ENCODE measurements at regions of chr5 and their contacts with region 1.

Region 1: GRCh38 chr5:10353241-10354047 is at the start of gene MARCHF6:
- DNase-seq: peak; percentile 96
- H3K4me3 Mint-ChIP-seq: peak within 1 kb of the TSS; percentile 99
- H3K27ac Mint-ChIP-seq: peak within 1 kb of the TSS; percentile 99
- H3K4me1 Mint-ChIP-seq: peaks cover 39% of the 10 kb centered on the region
- H3K27me3 Mint-ChIP-seq: no peaks in the 10 kb centered on the region
- total RNA-seq, gene MARCHF6: 103 to 108 TPM

Region 2: DNA sequence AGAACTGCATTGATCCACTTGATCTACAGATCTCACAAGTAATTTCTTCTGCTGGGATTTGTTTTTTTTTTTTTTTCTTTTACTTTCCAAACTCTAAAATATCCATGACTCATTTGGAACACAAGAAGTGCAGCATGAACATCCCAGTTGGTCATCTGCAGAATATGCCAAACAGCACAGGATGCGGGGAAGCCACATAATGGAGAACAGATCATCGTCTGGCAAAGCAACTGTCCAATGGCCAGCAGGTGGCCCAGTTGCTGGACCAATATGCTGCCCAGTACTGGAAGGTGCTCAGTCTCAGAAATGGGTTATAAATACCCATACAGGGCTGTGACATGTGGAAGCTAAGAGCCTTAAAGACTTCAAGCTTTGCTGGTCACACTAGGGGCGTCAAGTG is 502.0 kb before region 1 on chr5:
- CTCF ChIA-PET with region 1: no interaction called
- POLR2A ChIA-PET with region 1: no interaction called
- intact Hi-C with region 1: no loop called
- DNase-seq: no peak
- H3K4me3 Mint-ChIP-seq: no peak overlapping the region
- H3K27ac Mint-ChIP-seq: no peak overlapping the region
- H3K4me1 Mint-ChIP-seq: no peaks in the 10 kb centered on the region
- H3K27me3 Mint-ChIP-seq: no peaks in the 10 kb centered on the region

Region 3: GRCh38 chr5:10111571-10111970 is 241.9 kb before region 1 on chr5:
- CTCF ChIA-PET with region 1: no interaction called
- POLR2A ChIA-PET with region 1: no interaction called
- intact Hi-C with region 1: no loop called
- DNase-seq: no peak
- H3K4me3 Mint-ChIP-seq: no peak overlapping the region
- H3K27ac Mint-ChIP-seq: no peak overlapping the region
- H3K4me1 Mint-ChIP-seq: no peaks in the 10 kb centered on the region
- H3K27me3 Mint-ChIP-seq: peaks cover 6% of the 10 kb centered on the region

Region 4: DNA sequence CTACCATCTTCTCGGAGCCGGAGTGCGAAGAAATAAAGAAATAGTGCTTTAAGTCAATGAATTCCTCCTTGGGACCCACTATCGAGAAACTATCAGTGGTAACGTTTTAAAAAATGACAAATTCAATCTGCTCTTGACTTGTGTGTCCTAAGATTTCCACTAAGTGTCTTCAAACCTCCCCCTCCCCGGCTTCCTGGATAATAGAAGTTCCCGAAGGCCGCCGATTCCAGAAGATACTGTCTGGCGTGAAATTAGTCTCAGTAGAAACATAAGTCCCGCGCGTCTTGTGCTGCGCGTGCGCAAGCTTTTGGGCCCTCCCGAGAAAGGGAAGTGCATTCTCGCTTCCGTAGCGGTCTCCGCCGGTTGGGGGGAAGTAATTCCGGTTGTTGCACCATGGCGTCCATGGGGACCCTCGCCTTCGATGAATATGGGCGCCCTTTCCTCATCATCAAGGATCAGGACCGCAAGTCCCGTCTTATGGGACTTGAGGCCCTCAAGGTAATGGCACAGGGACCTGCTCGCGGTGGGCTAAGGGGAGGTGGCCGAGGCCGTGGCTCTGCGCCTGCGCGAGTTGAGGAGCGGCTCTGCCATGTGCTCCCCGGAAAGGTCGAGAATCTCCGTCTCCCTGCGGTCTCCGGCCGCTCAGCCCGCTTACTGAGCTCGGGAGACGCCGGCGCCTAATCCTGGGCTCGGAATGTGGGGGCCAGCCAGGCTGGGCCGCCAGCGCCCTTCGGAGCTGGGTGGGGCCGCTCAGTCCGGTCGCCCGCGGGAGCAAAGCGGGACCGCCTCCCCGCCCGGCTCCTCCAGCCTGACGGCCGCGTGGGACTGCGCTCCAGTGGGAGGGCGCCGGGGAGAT is 103.3 kb before region 1 on chr5 and contains the start of gene CCT5:
- CTCF ChIA-PET with region 1: interaction called, 4 read pairs
- POLR2A ChIA-PET with region 1: interaction called, 36 read pairs
- intact Hi-C with region 1: loop called (anchors 1 kb)
- DNase-seq: peak; percentile 93
- H3K4me3 Mint-ChIP-seq: peak within 1 kb of the TSS; percentile 84
- H3K27ac Mint-ChIP-seq: peak within 1 kb of the TSS; percentile 99
- H3K4me1 Mint-ChIP-seq: peaks cover 47% of the 10 kb centered on the region
- H3K27me3 Mint-ChIP-seq: no peaks in the 10 kb centered on the region
- total RNA-seq, gene CCT5: 360 to 375 TPM

Region 5: DNA sequence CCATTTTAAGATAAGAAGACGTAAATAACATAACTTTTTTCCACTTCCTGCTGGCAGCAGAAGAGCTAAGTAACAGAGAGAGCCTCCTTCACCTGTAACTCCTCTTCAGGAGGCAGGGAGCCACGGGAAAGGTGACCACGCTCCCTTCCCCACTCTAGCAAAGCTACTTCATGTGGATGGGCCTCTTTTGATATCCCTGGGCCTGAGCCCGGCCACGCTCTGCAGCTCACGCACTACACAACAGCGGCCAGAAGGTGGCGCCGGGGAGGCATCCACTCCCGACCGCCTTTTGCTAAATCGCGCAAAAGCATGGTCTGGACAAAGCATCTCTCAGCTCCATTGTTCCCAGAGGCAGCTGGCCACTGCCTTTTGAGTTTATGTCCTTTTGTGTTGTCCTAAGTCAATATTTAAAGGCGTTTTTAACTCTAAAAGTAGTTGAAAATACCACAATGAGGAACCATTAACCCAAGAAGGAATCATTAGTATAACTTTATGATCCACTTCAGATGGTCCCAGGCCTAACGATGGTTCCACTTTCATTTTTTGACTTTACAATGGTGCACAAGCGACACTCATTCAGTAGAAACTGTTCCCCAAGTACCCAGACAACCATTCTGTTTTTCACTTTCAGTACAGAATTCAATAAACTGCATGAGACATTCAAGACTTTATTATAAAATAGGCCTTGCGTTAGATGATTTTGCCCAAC is 69.4 kb before region 1 on chr5:
- CTCF ChIA-PET with region 1: interaction called, 12 read pairs
- POLR2A ChIA-PET with region 1: interaction called, 9 read pairs
- intact Hi-C with region 1: loop called (anchors 1 kb)
- DNase-seq: peak; percentile 87
- H3K4me3 Mint-ChIP-seq: no peak overlapping the region
- H3K27ac Mint-ChIP-seq: peak overlapping the region; percentile 13
- H3K4me1 Mint-ChIP-seq: peaks cover 18% of the 10 kb centered on the region
- H3K27me3 Mint-ChIP-seq: no peaks in the 10 kb centered on the region

Region 6: DNA sequence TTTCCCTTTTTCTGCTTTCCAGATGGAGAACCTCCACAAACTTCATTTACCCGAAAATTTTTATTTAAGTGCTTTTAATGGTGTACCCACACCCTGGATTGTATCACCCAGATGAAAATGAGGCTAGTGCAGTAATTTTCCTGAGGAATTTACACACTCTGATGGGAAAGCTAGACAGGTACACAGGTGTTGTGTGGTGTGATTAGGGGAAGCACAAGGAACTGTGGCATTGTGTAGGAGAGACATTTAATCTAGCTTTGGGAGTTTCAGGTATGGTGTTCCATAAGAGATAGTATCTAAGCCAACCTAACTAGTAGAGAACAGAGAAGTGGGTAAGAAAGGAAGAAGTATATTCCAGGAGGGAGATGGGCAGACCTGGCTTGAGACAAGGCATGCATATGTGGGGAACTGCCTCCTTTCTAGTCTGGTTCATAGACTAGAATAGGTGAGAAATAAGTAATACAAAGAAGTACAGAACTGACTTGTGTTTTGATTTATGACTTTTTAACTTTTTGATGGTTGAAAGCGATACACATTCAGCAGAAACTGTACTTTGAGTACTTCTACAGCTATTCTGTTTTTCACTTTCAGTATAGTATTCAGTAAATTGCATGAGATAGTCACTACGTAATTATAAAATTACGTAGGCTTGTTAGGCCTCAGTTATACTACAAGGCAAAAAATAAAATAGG is 65.4 kb after region 1 on chr5:
- CTCF ChIA-PET with region 1: interaction called, 9 read pairs
- POLR2A ChIA-PET with region 1: interaction called, 14 read pairs
- intact Hi-C with region 1: loop called (anchors 1 kb)
- DNase-seq: no peak
- H3K4me3 Mint-ChIP-seq: no peak overlapping the region
- H3K27ac Mint-ChIP-seq: peak overlapping the region; percentile 32
- H3K4me1 Mint-ChIP-seq: peaks cover 43% of the 10 kb centered on the region
- H3K27me3 Mint-ChIP-seq: no peaks in the 10 kb centered on the region

Region 7: DNA sequence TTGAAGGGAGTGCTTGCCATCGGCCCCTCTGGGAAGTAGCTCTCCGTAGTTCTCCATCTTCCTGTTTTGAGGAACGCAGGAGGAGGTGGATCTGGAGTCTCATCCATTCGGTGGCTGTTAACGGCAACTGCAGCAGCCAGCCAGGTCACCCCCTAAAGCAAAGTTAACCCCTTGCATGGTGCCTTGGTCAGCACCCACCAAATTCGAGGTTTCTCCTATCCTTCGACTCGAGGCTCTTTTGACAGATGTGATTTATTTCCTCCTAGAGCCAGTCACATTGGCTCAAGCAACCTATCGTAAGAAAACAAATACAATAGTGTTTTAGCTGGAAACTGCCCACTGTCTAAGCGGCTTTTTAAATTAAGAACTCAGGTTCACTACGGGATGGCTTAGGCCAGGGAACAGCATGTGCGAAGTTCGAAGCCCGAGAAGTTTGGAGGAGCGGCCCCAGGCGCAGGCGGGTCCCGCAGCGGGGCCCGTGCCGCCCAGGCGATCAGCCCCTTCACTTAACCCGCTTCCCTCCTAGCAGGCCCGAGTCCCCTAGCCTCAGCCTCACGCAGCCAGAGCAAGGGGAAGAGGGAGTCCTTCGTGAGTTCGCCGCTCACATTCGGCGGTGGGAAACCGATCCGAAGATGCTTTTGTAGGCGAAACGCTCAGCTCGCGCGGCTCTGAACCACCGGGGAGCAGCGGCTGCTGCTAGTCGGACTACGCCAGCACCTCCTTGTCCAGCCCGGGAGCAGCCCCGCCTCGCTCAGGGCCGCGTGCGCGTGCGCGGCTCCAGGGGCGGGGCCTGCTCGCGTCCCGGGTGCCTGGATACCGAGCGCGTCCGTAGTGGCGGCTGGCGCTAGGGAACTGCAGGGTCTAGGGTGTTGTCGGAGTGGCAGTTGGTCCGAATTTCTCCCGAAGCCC is 87.9 kb after region 1 on chr5 and contains the start of gene ROPN1L:
- CTCF ChIA-PET with region 1: interaction called, 3 read pairs
- POLR2A ChIA-PET with region 1: no interaction called
- intact Hi-C with region 1: loop called (anchors 2 kb)
- DNase-seq: peak; percentile 86
- H3K4me3 Mint-ChIP-seq: peak within 1 kb of the TSS; percentile 78
- H3K27ac Mint-ChIP-seq: no peak within 1 kb of the TSS
- H3K4me1 Mint-ChIP-seq: peaks cover 33% of the 10 kb centered on the region
- H3K27me3 Mint-ChIP-seq: no peaks in the 10 kb centered on the region
- total RNA-seq, gene ROPN1L: not detected

Region 8: GRCh38 chr5:10577371-10578292 is 224.2 kb after region 1 on chr5:
- CTCF ChIA-PET with region 1: no interaction called
- POLR2A ChIA-PET with region 1: no interaction called
- intact Hi-C with region 1: loop called (anchors 5 kb)
- DNase-seq: no peak
- H3K4me3 Mint-ChIP-seq: no peak overlapping the region
- H3K27ac Mint-ChIP-seq: no peak overlapping the region
- H3K4me1 Mint-ChIP-seq: peaks cover 57% of the 10 kb centered on the region
- H3K27me3 Mint-ChIP-seq: no peaks in the 10 kb centered on the region

Region 9: GRCh38 chr5:10761166-10761932 is 407.9 kb after region 1 on chr5 and contains the start of gene DAP:
- CTCF ChIA-PET with region 1: no interaction called
- POLR2A ChIA-PET with region 1: no interaction called
- intact Hi-C with region 1: loop called (anchors 5 kb)
- DNase-seq: peak; percentile 85
- H3K4me3 Mint-ChIP-seq: peak within 1 kb of the TSS; percentile 85
- H3K27ac Mint-ChIP-seq: peak within 1 kb of the TSS; percentile 78
- H3K4me1 Mint-ChIP-seq: peaks cover 37% of the 10 kb centered on the region
- H3K27me3 Mint-ChIP-seq: no peaks in the 10 kb centered on the region
- total RNA-seq, gene DAP: 39.0 to 39.7 TPM